ENCODE measurements at regions of chr16 and their contacts with region 1.

Region 1: GRCh38 chr16:29790183-29790952 is at the start of gene KIF22:
- DNase-seq: peak; percentile 100
- H3K4me3 Mint-ChIP-seq: peak within 1 kb of the TSS; percentile 98
- H3K27ac Mint-ChIP-seq: peak within 1 kb of the TSS; percentile 93
- H3K4me1 Mint-ChIP-seq: peaks cover 46% of the 10 kb centered on the region
- H3K27me3 Mint-ChIP-seq: no peaks in the 10 kb centered on the region
- total RNA-seq, gene KIF22: 132 and 136 TPM in 2 replicates

Region 2: GRCh38 chr16:29729116-29729521 is 61.2 kb before region 1 on chr16:
- intact Hi-C with region 1: loop called (anchors 1 kb)
- DNase-seq: no peak
- H3K4me3 Mint-ChIP-seq: no peak overlapping the region
- H3K27ac Mint-ChIP-seq: no peak overlapping the region
- H3K4me1 Mint-ChIP-seq: peaks cover 22% of the 10 kb centered on the region
- H3K27me3 Mint-ChIP-seq: peaks cover 11% of the 10 kb centered on the region

Region 3: GRCh38 chr16:29745853-29746345 is 44.5 kb before region 1 on chr16 and contains the start of gene C16orf54:
- intact Hi-C with region 1: loop called (anchors 2 kb)
- DNase-seq: peak; percentile 92
- H3K4me3 Mint-ChIP-seq: peak within 1 kb of the TSS; percentile 98
- H3K27ac Mint-ChIP-seq: peak within 1 kb of the TSS; percentile 94
- H3K4me1 Mint-ChIP-seq: peaks cover 41% of the 10 kb centered on the region
- H3K27me3 Mint-ChIP-seq: no peaks in the 10 kb centered on the region
- total RNA-seq, gene C16orf54: 18.0 and 18.5 TPM in 2 replicates

Region 4: GRCh38 chr16:29775742-29776408 is 14.5 kb before region 1 on chr16:
- intact Hi-C with region 1: no loop called
- DNase-seq: no peak
- H3K4me3 Mint-ChIP-seq: no peak overlapping the region
- H3K27ac Mint-ChIP-seq: no peak overlapping the region
- H3K4me1 Mint-ChIP-seq: no peaks in the 10 kb centered on the region
- H3K27me3 Mint-ChIP-seq: peaks cover 8% of the 10 kb centered on the region

Region 5: GRCh38 chr16:29815793-29816693 is 25.7 kb after region 1 on chr16 and contains the start of gene PAGR1:
- intact Hi-C with region 1: loop called (anchors 1 kb)
- DNase-seq: peak; percentile 99
- H3K4me3 Mint-ChIP-seq: peak within 1 kb of the TSS; percentile 89
- H3K27ac Mint-ChIP-seq: peak within 1 kb of the TSS; percentile 94
- H3K4me1 Mint-ChIP-seq: peaks cover 46% of the 10 kb centered on the region
- H3K27me3 Mint-ChIP-seq: peaks cover 1% of the 10 kb centered on the region
- total RNA-seq, gene PAGR1: 27.6 and 29.5 TPM in 2 replicates

Region 6: GRCh38 chr16:30142672-30143346 is 352.4 kb after region 1 on chr16:
- intact Hi-C with region 1: no loop called
- DNase-seq: peak; percentile 17
- H3K4me3 Mint-ChIP-seq: no peak overlapping the region
- H3K27ac Mint-ChIP-seq: peak overlapping the region; percentile 29
- H3K4me1 Mint-ChIP-seq: peaks cover 20% of the 10 kb centered on the region
- H3K27me3 Mint-ChIP-seq: no peaks in the 10 kb centered on the region